Natural killer cell (primary cell): ENCODE measurements at regions of chr10 and their contacts with region 1.

Region 1: DNA sequence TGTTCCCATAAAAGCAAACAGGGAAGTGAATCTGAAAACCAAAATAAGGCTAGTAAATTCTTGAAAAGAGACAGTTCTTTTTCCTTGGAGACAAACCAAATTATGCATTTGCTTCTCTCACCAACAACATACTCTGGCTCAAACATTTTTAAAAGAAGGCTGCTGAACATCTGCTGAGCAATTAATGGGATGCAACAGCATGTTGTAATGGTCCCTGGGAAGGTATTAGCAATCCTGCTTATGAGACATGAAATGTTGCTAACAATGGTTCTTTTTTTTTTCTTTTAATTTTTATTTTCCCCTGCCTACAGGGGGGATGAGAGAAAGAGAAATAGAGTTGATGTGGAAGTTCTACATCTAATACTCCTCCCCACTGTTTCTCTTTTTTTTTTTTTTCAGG is 572.1 kb downstream of the SORCS1 start:
- DNase-seq: no peak
- ATAC-seq: no peak
- H3K4me3 ChIP-seq: no peak overlapping the region
- H3K4me3 Mint-ChIP-seq: no peak overlapping the region
- H3K27ac ChIP-seq: no peak overlapping the region
- H3K27ac Mint-ChIP-seq: no peak overlapping the region
- H3K4me1 ChIP-seq: no peaks in the 10 kb centered on the region
- H3K4me1 Mint-ChIP-seq: no peaks in the 10 kb centered on the region
- H3K27me3 ChIP-seq: no peaks in the 10 kb centered on the region
- H3K27me3 Mint-ChIP-seq: no peaks in the 10 kb centered on the region
- CTCF ChIP-seq: no peak

Region 2: DNA sequence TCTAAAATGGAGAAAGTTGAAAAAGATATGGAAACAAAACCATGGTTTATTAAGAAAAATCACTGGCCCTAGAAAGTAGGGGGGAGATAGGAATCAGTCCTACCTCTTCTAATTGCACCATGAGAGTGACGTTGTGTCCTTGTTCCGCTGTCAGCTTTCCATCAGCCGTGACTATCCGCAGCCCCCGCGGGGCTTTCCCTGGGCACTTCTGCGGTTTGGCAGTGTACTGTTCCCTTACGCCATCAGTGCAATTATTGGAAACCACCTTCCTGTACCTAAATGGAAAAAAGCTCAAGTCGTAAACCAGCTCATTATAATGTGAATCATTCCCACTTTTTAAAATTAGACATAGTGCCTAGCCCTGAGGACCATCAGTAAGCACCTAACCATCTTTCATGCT is 59.9 kb after region 1 on chr10:
- intact Hi-C with region 1: loop called (anchors 10 kb)
- DNase-seq: no peak
- ATAC-seq: no peak
- H3K4me3 ChIP-seq: no peak overlapping the region
- H3K4me3 Mint-ChIP-seq: no peak overlapping the region
- H3K27ac ChIP-seq: no peak overlapping the region
- H3K27ac Mint-ChIP-seq: no peak overlapping the region
- H3K4me1 ChIP-seq: no peaks in the 10 kb centered on the region
- H3K4me1 Mint-ChIP-seq: no peaks in the 10 kb centered on the region
- H3K27me3 ChIP-seq: no peaks in the 10 kb centered on the region
- H3K27me3 Mint-ChIP-seq: peaks cover 0 to 5% of the 10 kb centered on the region in 2 donors
- CTCF ChIP-seq: no peak

Region 3: DNA sequence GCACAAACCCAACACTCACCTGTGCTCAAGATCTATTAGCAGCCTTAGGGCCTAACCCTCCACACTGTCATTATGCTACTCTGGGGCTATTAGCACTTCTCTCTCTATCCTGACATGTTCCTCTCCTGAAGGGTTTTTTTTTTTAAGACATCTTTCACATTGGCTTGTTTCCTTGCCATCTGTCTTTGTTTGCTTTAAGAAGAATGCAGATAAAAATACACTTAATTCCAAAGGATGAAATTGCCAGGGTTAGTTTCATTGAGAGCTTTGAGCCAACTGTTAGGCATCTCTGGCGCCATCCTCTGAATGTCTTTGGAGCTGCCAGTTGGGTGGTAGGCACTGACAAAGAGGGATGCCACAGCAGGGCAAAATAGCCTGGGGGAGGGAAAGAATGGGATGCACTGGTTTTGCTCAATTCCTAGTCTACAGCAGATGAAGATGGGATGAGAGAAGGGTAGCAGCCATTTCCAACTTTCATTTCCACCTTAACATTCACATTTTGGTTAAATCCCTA is 172.9 kb after region 1 on chr10:
- intact Hi-C with region 1: no loop called
- DNase-seq: no peak
- ATAC-seq: no peak
- H3K4me3 ChIP-seq: no peak overlapping the region
- H3K4me3 Mint-ChIP-seq: no peak overlapping the region
- H3K27ac ChIP-seq: no peak overlapping the region
- H3K27ac Mint-ChIP-seq: no peak overlapping the region
- H3K4me1 ChIP-seq: no peaks in the 10 kb centered on the region
- H3K4me1 Mint-ChIP-seq: no peaks in the 10 kb centered on the region
- H3K27me3 ChIP-seq: no peaks in the 10 kb centered on the region
- H3K27me3 Mint-ChIP-seq: peaks cover 5 to 21% of the 10 kb centered on the region in 2 donors
- CTCF ChIP-seq: no peak